WTC11 (cell line): ENCODE measurements at regions of chr9 and their contacts with region 1.

Region 1: GRCh38 chr9:95167998-95168397 is 149.5 kb downstream of the FANCC start:
- DNase-seq: peak; percentile 77
- ATAC-seq: peak; percentile 96
- H3K4me3 Mint-ChIP-seq: no peak overlapping the region
- H3K27ac Mint-ChIP-seq: peak overlapping the region; percentile 73; the same call in 1 of the 2 replicates
- H3K4me1 Mint-ChIP-seq: peaks cover 18% of the 10 kb centered on the region
- H3K27me3 Mint-ChIP-seq: no peaks in the 10 kb centered on the region
- CTCF ChIP-seq: peak; percentile 93

Region 2: GRCh38 chr9:94681508-94681907 is 486.5 kb before region 1 on chr9:
- CTCF ChIA-PET with region 1: interaction called, 15 read pairs
- POLR2A ChIA-PET with region 1: no interaction called
- DNase-seq: peak; percentile 68
- ATAC-seq: peak; percentile 97
- H3K4me3 Mint-ChIP-seq: no peak overlapping the region
- H3K27ac Mint-ChIP-seq: no peak overlapping the region
- H3K4me1 Mint-ChIP-seq: peaks cover 11% of the 10 kb centered on the region
- H3K27me3 Mint-ChIP-seq: peaks cover 5% of the 10 kb centered on the region; the same call in 1 of the 2 replicates
- CTCF ChIP-seq: 0 out of 2 replicates have a peak, but pooled peaks have one; percentile 36

Region 3: GRCh38 chr9:94909965-94910730 is 257.9 kb before region 1 on chr9:
- CTCF ChIA-PET with region 1: no interaction called
- POLR2A ChIA-PET with region 1: no interaction called
- DNase-seq: no peak
- ATAC-seq: no peak
- H3K4me3 Mint-ChIP-seq: no peak overlapping the region
- H3K27ac Mint-ChIP-seq: no peak overlapping the region
- H3K4me1 Mint-ChIP-seq: peaks cover 63% of the 10 kb centered on the region
- H3K27me3 Mint-ChIP-seq: no peaks in the 10 kb centered on the region
- CTCF ChIP-seq: no peak

Region 4: DNA sequence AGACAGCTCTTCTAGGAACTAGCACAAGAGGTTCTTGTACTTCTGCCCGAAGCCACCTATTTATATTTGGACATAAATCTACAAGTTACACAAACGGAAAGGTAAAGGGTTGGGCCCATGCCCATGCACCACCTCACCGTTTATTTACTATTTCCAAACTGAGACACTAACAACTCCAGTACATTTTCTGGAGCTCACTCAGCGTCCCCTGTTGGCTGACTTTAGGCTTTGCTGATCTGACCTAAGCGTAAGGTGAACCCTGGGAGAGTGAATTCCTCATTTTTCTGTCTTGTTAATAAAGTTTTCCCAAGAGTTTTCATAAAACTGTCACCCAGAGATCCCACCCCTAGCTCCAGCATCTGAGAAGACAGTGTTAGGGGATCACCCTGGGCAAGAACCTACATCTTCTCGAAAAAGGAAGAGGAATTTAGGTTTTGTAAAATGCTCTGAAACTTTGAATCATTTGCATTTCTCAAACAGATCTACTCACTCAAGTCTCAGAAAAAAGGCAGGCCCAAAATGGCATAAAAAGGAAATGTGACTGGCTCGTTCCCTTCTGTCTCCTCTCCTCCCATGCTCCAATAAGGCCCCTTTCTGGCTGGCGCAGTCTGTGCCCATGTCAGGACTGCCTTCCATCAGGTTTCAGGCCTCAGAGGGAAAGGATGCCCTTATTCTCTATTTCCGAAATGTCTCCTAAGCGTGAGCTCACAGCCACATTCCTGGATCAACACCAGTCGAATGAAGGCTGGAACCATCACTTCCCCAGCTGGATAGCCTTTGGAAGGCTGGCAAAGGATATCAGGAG is 51.8 kb before region 1 on chr9:
- CTCF ChIA-PET with region 1: interaction called, 13 read pairs
- POLR2A ChIA-PET with region 1: no interaction called
- DNase-seq: no peak
- ATAC-seq: peak; percentile 83
- H3K4me3 Mint-ChIP-seq: no peak overlapping the region
- H3K27ac Mint-ChIP-seq: no peak overlapping the region
- H3K4me1 Mint-ChIP-seq: peaks cover 10% of the 10 kb centered on the region
- H3K27me3 Mint-ChIP-seq: no peaks in the 10 kb centered on the region
- CTCF ChIP-seq: no peak

Region 5: GRCh38 chr9:95143591-95144561 is 24.1 kb before region 1 on chr9:
- CTCF ChIA-PET with region 1: interaction called, 21 read pairs
- POLR2A ChIA-PET with region 1: interaction called, 3 read pairs
- DNase-seq: no peak
- ATAC-seq: no peak
- H3K4me3 Mint-ChIP-seq: no peak overlapping the region
- H3K27ac Mint-ChIP-seq: peak overlapping the region; percentile 28; the same call in 1 of the 2 replicates
- H3K4me1 Mint-ChIP-seq: peaks cover 29% of the 10 kb centered on the region
- H3K27me3 Mint-ChIP-seq: no peaks in the 10 kb centered on the region
- CTCF ChIP-seq: no peak

Region 6: GRCh38 chr9:95157481-95158151 is 10.4 kb before region 1 on chr9:
- CTCF ChIA-PET with region 1: interaction called, 25 read pairs
- POLR2A ChIA-PET with region 1: interaction called, 3 read pairs
- DNase-seq: no peak
- ATAC-seq: no peak
- H3K4me3 Mint-ChIP-seq: no peak overlapping the region
- H3K27ac Mint-ChIP-seq: no peak overlapping the region
- H3K4me1 Mint-ChIP-seq: 0 out of 2 replicates have a peak, but pooled peaks cover 2% of the 10 kb centered on the region
- H3K27me3 Mint-ChIP-seq: no peaks in the 10 kb centered on the region
- CTCF ChIP-seq: no peak

Region 7: GRCh38 chr9:95193067-95193466 is 25.1 kb after region 1 on chr9:
- CTCF ChIA-PET with region 1: interaction called, 14 read pairs
- POLR2A ChIA-PET with region 1: no interaction called
- DNase-seq: no peak
- ATAC-seq: peak; percentile 92
- H3K4me3 Mint-ChIP-seq: no peak overlapping the region
- H3K27ac Mint-ChIP-seq: peak overlapping the region; percentile 22; the same call in 1 of the 2 replicates
- H3K4me1 Mint-ChIP-seq: peaks cover 28% of the 10 kb centered on the region
- H3K27me3 Mint-ChIP-seq: no peaks in the 10 kb centered on the region
- CTCF ChIP-seq: peak; percentile 67